PC-9 (cell line): ENCODE measurements at regions of chr12 and their contacts with region 1.

Region 1: GRCh38 chr12:49644620-49644994 is 21.2 kb downstream of the PRPF40B start:
- DNase-seq: peak; percentile 39 to 68
- H3K4me3 ChIP-seq: no peak overlapping the region
- H3K27ac ChIP-seq: no peak overlapping the region
- H3K4me1 ChIP-seq: peaks cover 19% of the 10 kb centered on the region
- H3K27me3 ChIP-seq: no peaks in the 10 kb centered on the region
- CTCF ChIP-seq: peak; percentile 90

Region 2: GRCh38 chr12:49358483-49359141 is 286.0 kb before region 1 on chr12:
- CTCF ChIA-PET with region 1: no interaction called
- POLR2A ChIA-PET with region 1: no interaction called
- intact Hi-C with region 1: no loop called
- DNase-seq: peak; percentile 51 to 54
- H3K4me3 ChIP-seq: no peak overlapping the region
- H3K27ac ChIP-seq: no peak overlapping the region
- H3K4me1 ChIP-seq: no peaks in the 10 kb centered on the region
- H3K27me3 ChIP-seq: no peaks in the 10 kb centered on the region
- CTCF ChIP-seq: peak; percentile 87

Region 3: DNA sequence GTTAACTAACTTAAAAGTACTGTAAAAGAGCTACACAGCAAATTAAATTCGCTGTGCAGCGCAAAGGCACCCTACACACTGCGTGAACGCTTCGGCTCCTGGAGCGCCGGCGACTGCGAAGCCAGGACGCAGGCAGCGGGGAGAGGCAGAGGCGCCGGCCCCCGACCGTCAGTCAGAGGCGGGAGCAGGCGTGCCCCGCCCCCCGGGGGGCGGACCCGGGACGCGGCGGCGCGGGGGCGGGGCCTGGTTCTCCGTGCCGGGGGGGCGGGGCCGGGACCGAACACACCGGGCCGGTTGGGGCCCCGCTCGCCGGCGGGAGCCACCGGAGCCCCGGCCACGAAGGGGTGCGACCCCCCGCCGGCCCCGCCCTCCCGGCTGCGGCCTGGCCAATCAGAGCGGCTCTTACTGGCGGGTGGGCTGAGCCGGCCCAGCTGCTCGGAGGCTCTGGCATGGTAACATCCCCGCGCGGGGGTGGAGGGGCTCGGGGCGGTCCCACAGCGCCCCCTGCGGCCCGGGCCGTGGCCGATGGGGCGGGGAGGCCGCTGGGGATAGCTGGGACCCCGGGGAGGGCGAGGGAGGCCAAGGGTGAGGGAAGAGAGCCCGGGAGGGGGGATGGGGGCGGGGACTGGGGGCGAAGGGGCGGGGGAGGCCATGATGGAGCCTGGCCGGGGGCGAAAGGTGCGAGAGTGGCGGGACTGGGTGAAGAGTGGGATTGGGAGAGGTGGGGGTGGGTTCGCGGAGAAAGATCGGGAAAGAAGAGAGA is 21.3 kb before region 1 on chr12 and contains the start of gene PRPF40B:
- CTCF ChIA-PET with region 1: interaction called, 5 read pairs
- POLR2A ChIA-PET with region 1: interaction called, 4 read pairs
- intact Hi-C with region 1: loop called (anchors 2 kb)
- DNase-seq: peak; percentile 56 to 88
- H3K4me3 ChIP-seq: peak within 1 kb of the TSS; percentile 97
- H3K27ac ChIP-seq: peak within 1 kb of the TSS; percentile 56
- H3K4me1 ChIP-seq: peaks cover 48% of the 10 kb centered on the region
- H3K27me3 ChIP-seq: no peaks in the 10 kb centered on the region
- CTCF ChIP-seq: peak; percentile 54
- total RNA-seq, gene PRPF40B: 27.5 and 28.9 TPM in 2 replicates

Region 4: GRCh38 chr12:49707128-49707811 is 62.7 kb after region 1 on chr12 and contains the start of gene FMNL3:
- CTCF ChIA-PET with region 1: interaction called, 20 read pairs
- POLR2A ChIA-PET with region 1: no interaction called
- intact Hi-C with region 1: loop called (anchors 1 kb)
- DNase-seq: peak; percentile 71 to 96
- H3K4me3 ChIP-seq: peak within 1 kb of the TSS; percentile 65
- H3K27ac ChIP-seq: no peak within 1 kb of the TSS
- H3K4me1 ChIP-seq: no peaks in the 10 kb centered on the region
- H3K27me3 ChIP-seq: peaks cover 36% of the 10 kb centered on the region
- CTCF ChIP-seq: peak; percentile 89
- total RNA-seq, gene FMNL3: 5.6 and 6.5 TPM in 2 replicates

Region 5: DNA sequence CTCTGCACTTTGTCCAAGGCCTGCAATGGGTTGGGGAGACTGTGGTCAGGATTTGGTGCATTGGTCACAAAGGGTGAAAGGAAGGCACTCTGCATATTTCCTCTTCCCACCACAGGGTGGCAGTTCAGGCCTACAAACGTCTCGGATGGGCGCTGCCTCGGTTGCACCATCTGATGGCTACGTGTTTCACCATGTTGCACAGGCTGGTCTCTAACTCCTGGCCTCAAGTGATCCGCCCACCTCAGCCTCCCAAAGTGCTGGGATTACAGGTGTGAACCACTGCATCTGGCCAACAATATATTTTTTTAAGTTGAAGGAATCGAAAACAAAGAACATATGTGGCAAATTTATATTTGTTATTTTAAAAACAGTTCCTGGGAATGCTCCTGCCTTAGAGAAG is 131.8 kb after region 1 on chr12:
- CTCF ChIA-PET with region 1: no interaction called
- POLR2A ChIA-PET with region 1: no interaction called
- intact Hi-C with region 1: loop called (anchors 5 kb)
- DNase-seq: peak; percentile 51 to 54
- H3K4me3 ChIP-seq: no peak overlapping the region
- H3K27ac ChIP-seq: no peak overlapping the region
- H3K4me1 ChIP-seq: no peaks in the 10 kb centered on the region
- H3K27me3 ChIP-seq: no peaks in the 10 kb centered on the region
- CTCF ChIP-seq: peak; percentile 88

Region 6: GRCh38 chr12:49842519-49843352 is 198.1 kb after region 1 on chr12 and contains the start of gene BCDIN3D:
- CTCF ChIA-PET with region 1: no interaction called
- POLR2A ChIA-PET with region 1: no interaction called
- intact Hi-C with region 1: loop called (anchors 5 kb)
- DNase-seq: peak; percentile 89 to 92
- H3K4me3 ChIP-seq: peak within 1 kb of the TSS; percentile 69
- H3K27ac ChIP-seq: peak within 1 kb of the TSS; percentile 77
- H3K4me1 ChIP-seq: peaks cover 21% of the 10 kb centered on the region
- H3K27me3 ChIP-seq: no peaks in the 10 kb centered on the region
- CTCF ChIP-seq: no peak
- total RNA-seq, gene BCDIN3D: 2.5 and 4.7 TPM in 2 replicates

Region 7: DNA sequence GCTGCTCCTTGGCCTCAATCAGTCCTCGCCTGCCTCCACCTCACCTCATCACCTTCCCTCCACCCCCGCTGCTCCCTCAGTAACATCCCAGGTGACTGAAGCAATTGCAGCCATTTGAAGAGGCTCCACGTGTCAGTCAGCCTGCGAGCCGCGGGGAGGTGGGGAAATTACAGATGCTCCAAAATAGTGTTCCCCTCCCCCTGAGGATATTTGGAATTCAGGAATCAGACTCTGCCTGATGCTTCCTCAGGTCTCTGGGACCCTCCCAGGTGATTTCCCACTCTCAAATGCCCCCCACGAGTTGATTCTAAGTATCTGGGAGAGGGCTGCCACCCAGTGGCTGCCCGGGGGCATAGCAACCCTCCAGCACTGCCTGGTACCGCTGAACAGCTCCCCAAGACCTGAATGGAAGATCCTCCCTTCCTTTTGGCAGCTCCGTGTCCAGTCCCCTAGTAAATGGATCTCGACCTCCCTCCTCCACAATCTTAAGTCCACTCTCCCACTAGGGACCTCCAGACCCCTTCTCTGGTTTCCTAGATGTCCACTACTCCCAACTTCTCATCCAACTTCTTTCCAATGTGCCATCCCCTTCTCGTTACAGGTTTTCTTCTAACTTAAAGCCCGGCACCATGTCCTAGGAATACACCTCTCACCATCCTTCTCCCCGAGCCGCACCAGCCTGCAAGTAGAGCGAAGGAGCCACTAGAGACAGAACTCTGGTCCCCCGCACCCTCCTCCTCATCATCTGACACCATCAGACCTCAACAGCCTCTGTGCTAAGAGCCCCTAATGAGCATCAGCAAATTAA is 411.4 kb after region 1 on chr12:
- CTCF ChIA-PET with region 1: no interaction called
- POLR2A ChIA-PET with region 1: no interaction called
- intact Hi-C with region 1: loop called (anchors 10 kb)
- DNase-seq: peak in 1 of 2 experiments; percentile 37
- H3K4me3 ChIP-seq: no peak overlapping the region
- H3K27ac ChIP-seq: no peak overlapping the region
- H3K4me1 ChIP-seq: peaks cover 5% of the 10 kb centered on the region
- H3K27me3 ChIP-seq: peaks cover 23% of the 10 kb centered on the region
- CTCF ChIP-seq: peak; percentile 93